Endothelial cell of umbilical vein (primary cell): ENCODE measurements at regions of chr17 and their contacts with region 1.

Region 1: DNA sequence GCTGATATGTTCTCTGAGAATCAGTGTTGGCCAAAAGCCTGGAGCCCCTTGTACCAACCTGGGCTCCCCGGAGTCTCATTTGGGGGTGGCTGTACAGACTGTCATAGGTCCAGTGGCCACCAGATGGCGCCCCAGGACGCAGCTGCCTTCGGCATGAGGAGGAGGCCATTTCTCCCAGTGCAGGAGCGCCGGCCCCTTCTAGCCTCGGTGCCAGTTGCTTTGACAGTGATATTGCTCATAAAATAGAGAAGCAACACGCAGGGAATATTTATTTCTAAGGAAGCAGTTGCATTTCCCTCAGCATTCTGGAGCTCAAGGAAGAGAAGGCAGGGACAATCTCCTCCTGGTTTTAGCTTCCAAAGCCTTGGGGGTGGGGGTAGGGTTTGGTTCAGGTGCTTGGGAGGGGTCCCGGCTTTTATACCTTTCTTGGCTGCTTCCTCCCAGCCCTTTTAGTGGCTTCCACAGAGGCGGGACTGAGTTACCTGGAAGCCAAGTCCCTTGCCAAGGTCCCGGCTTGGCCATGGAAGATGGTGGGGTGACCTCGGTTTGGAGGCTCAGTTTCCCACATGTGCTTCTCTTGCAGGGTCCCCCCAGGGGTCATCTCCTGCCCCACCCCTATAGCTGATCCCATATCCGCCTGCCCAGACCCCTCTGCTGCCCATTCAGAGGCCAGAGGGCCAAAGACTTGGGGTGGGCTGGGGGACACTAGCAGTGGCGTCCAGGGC is 117.8 kb upstream of the CDC42EP4 start:
- DNase-seq: peak; percentile 58
- H3K4me3 ChIP-seq: no peak overlapping the region
- H3K27ac ChIP-seq: no peak overlapping the region
- H3K4me1 ChIP-seq: no peaks in the 10 kb centered on the region
- H3K27me3 ChIP-seq: no peaks in the 10 kb centered on the region
- CTCF ChIP-seq: peak; percentile 92 to 94
- POLR2A ChIP-seq: no peak

Region 2: DNA sequence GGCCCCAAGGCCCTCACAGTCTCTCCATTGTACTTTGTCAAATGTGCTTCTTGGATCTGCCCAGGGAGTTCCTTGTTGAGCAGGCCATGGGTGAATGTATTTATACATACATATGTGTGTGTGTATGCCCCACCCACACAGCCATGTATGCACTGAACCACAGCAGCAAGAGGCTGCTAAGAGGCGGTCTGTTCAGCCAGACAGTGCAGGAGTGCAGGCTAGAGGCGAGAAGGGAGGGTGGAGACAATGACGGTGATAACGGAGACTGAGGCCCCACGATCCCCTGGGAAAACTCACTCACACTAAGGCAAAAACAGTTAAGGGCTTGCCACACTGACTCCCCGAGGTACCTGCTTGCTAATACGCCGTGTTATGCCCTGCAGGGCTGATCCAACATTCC is 33.2 kb after region 1 on chr17:
- CTCF ChIA-PET with region 1: no interaction called
- POLR2A ChIA-PET with region 1: no interaction called
- dilution Hi-C with region 1: no loop called
- intact Hi-C with region 1: no loop called
- DNase-seq: no peak
- H3K4me3 ChIP-seq: no peak overlapping the region
- H3K27ac ChIP-seq: no peak overlapping the region
- H3K4me1 ChIP-seq: no peaks in the 10 kb centered on the region
- H3K27me3 ChIP-seq: no peaks in the 10 kb centered on the region
- CTCF ChIP-seq: no peak
- POLR2A ChIP-seq: no peak

Region 3: DNA sequence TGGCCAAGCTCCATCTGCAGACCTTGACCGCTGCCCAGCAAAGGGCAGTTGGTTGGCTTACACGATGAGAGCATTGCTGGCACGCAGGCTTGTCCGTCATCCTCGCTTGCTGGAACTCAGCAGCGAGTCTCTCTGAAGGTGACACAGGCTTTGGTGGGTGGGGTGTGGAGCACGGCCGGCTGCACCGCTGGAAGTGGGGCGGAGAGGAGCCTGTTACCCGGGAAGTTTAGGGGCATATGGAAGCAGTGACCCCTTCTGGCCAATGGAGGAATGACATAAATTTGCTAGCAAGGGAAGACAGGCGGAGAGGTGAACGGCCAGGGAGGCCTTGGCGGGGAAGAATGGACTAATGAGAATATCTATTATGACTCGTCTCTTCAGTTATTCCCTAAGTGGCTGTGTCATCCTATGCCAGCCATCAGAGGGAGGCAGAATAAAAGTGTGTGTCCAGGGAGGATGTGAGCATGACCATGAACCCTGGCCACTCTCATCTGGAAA is 280.5 kb after region 1 on chr17:
- CTCF ChIA-PET with region 1: interaction called, 11 read pairs
- POLR2A ChIA-PET with region 1: no interaction called
- dilution Hi-C with region 1: no loop called
- intact Hi-C with region 1: no loop called
- DNase-seq: no peak
- H3K4me3 ChIP-seq: no peak overlapping the region
- H3K27ac ChIP-seq: no peak overlapping the region
- H3K4me1 ChIP-seq: no peaks in the 10 kb centered on the region
- H3K27me3 ChIP-seq: no peaks in the 10 kb centered on the region
- CTCF ChIP-seq: peak; percentile 45 to 51
- POLR2A ChIP-seq: no peak

Region 4: DNA sequence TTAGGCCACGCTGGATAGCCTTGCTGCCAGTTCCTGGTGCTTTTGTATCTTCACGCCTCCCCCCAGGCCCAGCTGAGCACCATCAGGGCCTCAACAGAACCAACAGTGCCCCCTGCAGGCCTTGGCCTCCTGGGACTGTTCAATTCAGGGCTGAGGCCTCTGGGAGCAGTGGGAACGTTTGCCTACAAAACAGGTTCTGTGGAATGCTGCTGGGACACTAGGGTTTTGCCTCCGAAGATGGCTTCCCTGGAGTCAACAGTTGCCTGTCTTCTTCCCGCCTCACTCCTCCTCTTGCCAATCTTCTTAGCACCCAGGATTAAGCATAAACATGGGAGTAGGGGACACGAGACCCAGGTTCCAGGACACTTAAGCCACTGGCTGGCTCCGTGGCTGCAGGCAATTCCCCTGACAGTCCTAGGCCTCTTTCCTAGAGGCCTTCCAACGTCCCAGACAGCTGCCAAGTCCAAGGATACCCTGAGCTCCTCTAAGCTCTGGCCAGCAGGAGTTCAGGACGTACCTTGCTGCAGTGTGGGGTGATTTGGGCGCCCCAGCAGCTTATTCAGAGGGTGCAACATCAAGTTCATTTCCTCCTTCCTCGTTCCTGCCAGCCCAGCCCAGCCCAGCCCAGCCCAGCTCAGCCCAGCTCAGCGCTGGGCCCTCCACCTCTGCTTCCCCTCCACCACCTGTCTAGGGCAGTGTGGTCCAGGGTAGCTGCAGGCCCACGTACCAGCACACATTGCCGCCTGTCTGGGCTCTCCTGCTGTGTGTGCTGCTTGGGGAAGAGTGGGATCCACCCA is 527.3 kb after region 1 on chr17:
- CTCF ChIA-PET with region 1: no interaction called
- POLR2A ChIA-PET with region 1: no interaction called
- dilution Hi-C with region 1: no loop called
- intact Hi-C with region 1: loop called (anchors 5 kb)
- DNase-seq: no peak
- H3K4me3 ChIP-seq: no peak overlapping the region
- H3K27ac ChIP-seq: no peak overlapping the region
- H3K4me1 ChIP-seq: no peaks in the 10 kb centered on the region
- H3K27me3 ChIP-seq: no peaks in the 10 kb centered on the region
- CTCF ChIP-seq: no peak
- POLR2A ChIP-seq: no peak

Region 5: DNA sequence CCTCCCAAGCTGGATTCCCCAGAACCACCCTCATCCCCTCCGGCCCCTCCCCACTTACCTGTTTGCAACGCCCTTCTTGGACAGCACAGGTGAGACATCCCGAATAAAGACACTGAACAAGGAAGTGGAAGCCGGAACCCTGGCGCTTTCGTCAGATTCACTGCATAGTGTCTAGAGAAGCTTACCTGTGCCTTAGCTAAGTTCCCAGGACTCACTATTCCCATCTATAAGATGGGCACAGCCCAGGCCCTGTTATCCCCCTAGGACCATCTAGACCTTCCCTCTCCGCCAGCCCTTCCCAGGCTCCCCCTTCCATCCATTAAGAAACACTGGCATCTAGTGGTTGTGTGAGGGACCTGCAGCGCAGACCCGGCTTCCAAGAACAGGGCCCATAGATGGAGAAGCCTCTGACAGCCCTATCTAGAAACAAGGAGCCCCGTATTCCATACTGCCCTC is 747.0 kb after region 1 on chr17:
- CTCF ChIA-PET with region 1: interaction called, 33 read pairs
- POLR2A ChIA-PET with region 1: no interaction called
- dilution Hi-C with region 1: no loop called
- intact Hi-C with region 1: loop called (anchors 1 kb)
- DNase-seq: peak; percentile 57
- H3K4me3 ChIP-seq: no peak overlapping the region
- H3K27ac ChIP-seq: no peak overlapping the region
- H3K4me1 ChIP-seq: no peaks in the 10 kb centered on the region
- H3K27me3 ChIP-seq: no peaks in the 10 kb centered on the region
- CTCF ChIP-seq: peak; percentile 70 to 83
- POLR2A ChIP-seq: no peak